ENCODE measurements at regions of chr14 and their contacts with region 1.

Region 1: GRCh38 chr14:59964251-59965007 is 44.5 kb downstream of the LRRC9 start:
- DNase-seq: no peak
- ATAC-seq: peak in 3 of 4 donors; percentile 13 to 22 (median 14)
- H3K4me3 ChIP-seq: no peak overlapping the region
- H3K27ac ChIP-seq: no peak overlapping the region
- H3K4me1 ChIP-seq: no peaks in the 10 kb centered on the region
- H3K27me3 ChIP-seq: no peaks in the 10 kb centered on the region
- CTCF ChIP-seq: no peak
- POLR2A ChIP-seq: no peak

Region 2: GRCh38 chr14:59768855-59769375 is 195.5 kb before region 1 on chr14:
- intact Hi-C with region 1: no loop called
- DNase-seq: no peak
- ATAC-seq: no peak
- H3K4me3 ChIP-seq: no peak overlapping the region
- H3K27ac ChIP-seq: no peak overlapping the region
- H3K4me1 ChIP-seq: no peaks in the 10 kb centered on the region
- H3K27me3 ChIP-seq: no peaks in the 10 kb centered on the region
- CTCF ChIP-seq: no peak
- POLR2A ChIP-seq: no peak

Region 3: DNA sequence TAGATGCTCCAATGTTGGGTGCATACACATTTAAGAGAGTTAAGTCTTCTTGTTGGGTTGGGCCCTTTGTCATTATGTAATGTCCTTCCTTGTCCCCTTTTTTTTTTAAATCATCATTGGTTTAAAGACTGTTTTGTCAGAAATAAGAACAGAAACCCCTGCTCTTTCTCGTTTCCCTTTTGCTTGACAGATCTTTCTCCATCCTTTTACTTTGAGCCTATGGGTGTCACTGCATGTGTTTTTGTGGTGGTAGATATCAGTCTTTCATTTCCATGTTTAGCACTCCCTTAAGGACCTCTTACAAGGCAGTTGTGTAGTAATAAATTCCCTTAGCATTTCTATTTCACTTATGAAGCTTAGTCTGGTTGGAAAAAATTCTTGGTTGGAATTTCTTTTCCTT is 141.2 kb before region 1 on chr14:
- intact Hi-C with region 1: no loop called
- DNase-seq: no peak
- ATAC-seq: no peak
- H3K4me3 ChIP-seq: no peak overlapping the region
- H3K27ac ChIP-seq: no peak overlapping the region
- H3K4me1 ChIP-seq: no peaks in the 10 kb centered on the region
- H3K27me3 ChIP-seq: no peaks in the 10 kb centered on the region
- CTCF ChIP-seq: no peak
- POLR2A ChIP-seq: no peak

Region 4: DNA sequence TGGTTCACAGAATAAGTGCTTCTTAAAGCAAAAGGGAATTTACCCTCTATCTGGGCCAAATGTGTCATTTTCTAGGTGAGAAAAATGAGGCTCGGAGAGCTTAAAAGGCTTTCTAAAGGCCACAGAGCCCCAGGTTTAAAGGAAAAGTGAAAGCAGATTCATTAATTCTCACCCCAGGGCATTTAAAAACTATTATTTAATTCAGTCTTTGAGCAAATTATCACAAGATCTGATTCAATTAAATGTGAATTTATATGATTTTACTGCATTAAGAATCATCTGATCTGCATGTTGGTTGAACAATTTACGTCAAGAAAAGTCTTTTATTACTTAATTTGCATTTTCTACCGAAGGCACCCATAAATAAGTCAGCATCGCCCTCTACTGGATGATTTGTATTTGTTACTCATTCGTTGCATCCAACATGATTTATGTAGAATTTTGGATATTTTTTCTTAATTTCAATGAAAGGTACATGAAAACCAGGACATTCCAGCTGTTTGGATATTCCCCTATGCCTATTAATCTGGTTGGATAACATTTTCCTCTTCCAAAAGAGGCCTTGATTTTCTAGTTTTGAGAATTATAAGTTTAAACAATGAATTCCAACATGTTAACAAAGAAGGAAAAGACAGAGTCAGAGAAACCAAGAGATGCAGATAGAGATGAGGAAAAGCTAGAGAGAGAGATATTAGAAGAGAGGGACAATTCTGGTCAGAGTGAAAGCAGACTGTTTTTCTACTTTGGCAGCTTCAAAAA is 219.9 kb after region 1 on chr14:
- intact Hi-C with region 1: loop called in 1 of 2 experiments (anchors 10 kb)
- DNase-seq: no peak
- ATAC-seq: peak; percentile 73 to 91 (median 84)
- H3K4me3 ChIP-seq: peak overlapping the region; percentile 23 to 52 (median 47)
- H3K27ac ChIP-seq: peak overlapping the region; percentile 3 to 53 (median 41)
- H3K4me1 ChIP-seq: no peaks in the 10 kb centered on the region
- H3K27me3 ChIP-seq: no peaks in the 10 kb centered on the region
- CTCF ChIP-seq: peak; percentile 72 to 94 (median 78)
- POLR2A ChIP-seq: no peak